ENCODE measurements at regions of chr2 and their contacts with region 1.

Region 1: GRCh38 chr2:231189571-231190495 is 8.6 kb upstream of the ARMC9 start:
- DNase-seq: peak in 2 of 4 donors; percentile 40 to 44
- ATAC-seq: peak; percentile 76
- H3K4me3 ChIP-seq: peak overlapping the region; percentile 22
- H3K27ac ChIP-seq: peak overlapping the region; percentile 73 to 91
- H3K4me1 ChIP-seq: peaks cover 4 to 22% of the 10 kb centered on the region in 2 donors
- H3K27me3 ChIP-seq: peaks cover 0 to 13% of the 10 kb centered on the region in 2 donors
- CTCF ChIP-seq: no peak

Region 2: GRCh38 chr2:231110551-231110950 is 79.3 kb before region 1 on chr2:
- intact Hi-C with region 1: loop called in 1 of 2 experiments (anchors 5 kb)
- DNase-seq: peak in 2 of 4 donors; percentile 54 to 72
- ATAC-seq: peak; percentile 60
- H3K4me3 ChIP-seq: no peak overlapping the region
- H3K27ac ChIP-seq: peak overlapping the region in 1 of 2 donors; percentile 6
- H3K4me1 ChIP-seq: peaks cover 0 to 7% of the 10 kb centered on the region in 2 donors
- H3K27me3 ChIP-seq: no peaks in the 10 kb centered on the region
- CTCF ChIP-seq: no peak

Measured in left lung (tissue), 14 donors.